Endothelial cell of umbilical vein (primary cell): ENCODE measurements at regions of chr14 and their contacts with region 1.

Region 1: DNA sequence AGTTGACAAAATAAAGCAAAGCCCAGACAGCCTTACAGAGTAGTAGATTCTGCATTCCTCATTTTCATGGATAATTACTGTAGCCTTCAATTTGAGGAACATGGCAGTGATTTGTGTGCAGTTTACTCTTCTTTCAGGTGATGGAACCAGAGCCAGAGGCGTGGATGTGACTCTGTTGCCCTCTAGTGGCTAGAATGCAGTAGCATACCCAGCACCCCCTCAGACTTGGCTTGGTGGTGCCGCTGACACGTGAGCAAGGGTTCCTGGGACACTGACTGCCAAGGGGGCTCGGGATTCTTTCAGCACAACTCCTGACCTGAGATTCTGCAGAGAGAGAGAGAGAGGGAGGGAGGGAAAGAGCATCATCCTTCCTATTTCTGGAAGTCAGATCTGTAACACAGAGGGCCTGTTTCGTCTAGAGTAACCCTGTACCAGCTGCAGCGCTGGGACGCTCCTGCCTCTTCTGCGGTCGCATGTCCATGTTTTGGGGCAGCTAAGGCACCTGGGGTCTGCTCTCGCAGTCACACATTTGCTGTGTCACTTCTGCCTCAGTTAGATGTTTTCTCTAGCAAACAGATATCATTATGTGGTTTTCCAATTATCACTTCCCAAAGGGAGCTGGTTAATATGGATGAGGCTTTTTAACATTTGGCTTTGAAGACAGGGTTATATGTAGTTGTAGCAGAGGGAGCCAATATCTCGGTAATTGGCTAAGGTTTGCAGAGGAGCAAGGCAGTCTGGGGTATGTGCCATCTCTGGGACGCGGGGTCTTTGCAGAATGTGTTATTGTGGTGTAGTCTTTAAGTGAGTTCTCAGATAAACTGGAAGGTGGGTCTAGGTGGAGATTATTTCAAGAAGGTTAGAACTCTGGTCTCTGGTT is 428.1 kb downstream of the NRXN3 start:
- DNase-seq: peak; percentile 58
- H3K4me3 ChIP-seq: no peak overlapping the region
- H3K27ac ChIP-seq: no peak overlapping the region
- H3K4me1 ChIP-seq: no peaks in the 10 kb centered on the region
- H3K27me3 ChIP-seq: peaks cover 4 to 9% of the 10 kb centered on the region in 2 experiments
- CTCF ChIP-seq: peak; percentile 87 to 96
- POLR2A ChIP-seq: no peak

Region 2: DNA sequence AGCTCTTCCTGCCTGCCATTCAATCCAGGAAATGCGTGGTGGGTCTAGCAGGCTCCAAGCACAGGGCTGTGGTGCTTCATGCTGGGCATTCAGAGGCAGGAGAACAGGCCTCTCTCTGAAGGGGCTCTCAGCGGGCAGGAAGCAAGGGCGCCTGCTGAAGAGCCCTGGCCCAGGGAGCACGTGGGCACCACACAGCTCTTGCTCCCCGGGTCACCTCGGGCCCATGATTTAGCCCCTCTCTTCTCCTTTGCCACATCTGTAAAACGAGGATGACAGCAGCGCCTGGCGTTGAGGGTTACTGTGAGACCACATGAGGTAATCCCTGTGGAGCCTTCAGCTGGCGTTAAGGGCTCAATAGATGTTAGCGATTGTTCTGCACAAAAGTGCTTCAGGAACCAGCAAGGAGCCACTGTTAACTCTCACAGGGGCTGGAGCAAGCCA is 944.3 kb before region 1 on chr14:
- CTCF ChIA-PET with region 1: interaction called, 3 read pairs
- POLR2A ChIA-PET with region 1: no interaction called
- dilution Hi-C with region 1: no loop called
- intact Hi-C with region 1: loop called (anchors 10 kb)
- DNase-seq: no peak
- H3K4me3 ChIP-seq: no peak overlapping the region
- H3K27ac ChIP-seq: no peak overlapping the region
- H3K4me1 ChIP-seq: peaks cover 7% of the 10 kb centered on the region
- H3K27me3 ChIP-seq: no peaks in the 10 kb centered on the region
- CTCF ChIP-seq: no peak
- POLR2A ChIP-seq: no peak

Region 3: DNA sequence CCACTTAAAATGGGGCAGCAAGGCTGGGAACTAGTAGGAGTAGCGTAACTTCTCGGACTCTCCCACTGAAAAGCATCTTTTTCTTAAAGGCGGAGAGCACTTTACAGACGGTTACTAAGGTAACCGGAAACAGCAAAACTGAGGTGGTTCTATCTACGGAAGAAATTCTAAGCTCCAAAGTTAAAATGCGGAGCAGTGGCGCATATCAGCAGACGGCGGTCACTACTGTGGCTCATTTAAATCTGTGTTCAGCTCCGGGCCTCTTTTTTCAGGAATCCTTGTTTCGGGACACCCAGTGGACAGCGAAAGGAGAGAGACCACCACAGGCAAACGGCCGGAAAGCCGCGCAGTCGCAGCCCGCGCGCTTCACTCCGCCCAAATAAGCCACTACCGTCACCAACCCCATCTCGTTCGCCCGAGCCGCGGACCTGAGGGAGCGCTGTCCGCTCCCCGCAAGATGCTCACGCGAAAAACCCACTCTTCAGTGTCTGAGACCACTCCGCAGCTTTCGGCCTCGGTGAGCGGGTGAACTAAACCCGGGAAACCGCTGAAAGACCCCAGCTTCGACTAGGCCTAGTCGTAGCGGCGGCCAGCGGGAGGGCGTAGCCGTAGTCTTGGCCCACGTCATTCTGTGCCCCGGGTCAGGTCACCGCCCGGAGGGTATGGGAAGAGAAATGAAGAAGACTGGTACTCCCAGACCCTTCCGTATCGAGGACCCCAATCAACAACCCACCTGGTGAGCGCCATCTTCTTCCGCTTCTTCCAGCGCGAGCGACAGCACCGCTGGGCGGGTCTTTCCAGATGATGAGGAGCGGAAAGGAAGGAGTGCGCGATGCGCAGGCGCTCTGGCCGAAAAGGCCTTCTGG is 837.7 kb before region 1 on chr14 and contains the start of gene SNW1:
- CTCF ChIA-PET with region 1: no interaction called
- POLR2A ChIA-PET with region 1: no interaction called
- dilution Hi-C with region 1: no loop called
- intact Hi-C with region 1: loop called (anchors 2 kb)
- DNase-seq: peak; percentile 96
- H3K4me3 ChIP-seq: peak within 1 kb of the TSS; percentile 79 to 93 (median 82)
- H3K27ac ChIP-seq: peak within 1 kb of the TSS; percentile 94
- H3K4me1 ChIP-seq: peaks cover 8% of the 10 kb centered on the region
- H3K27me3 ChIP-seq: no peaks in the 10 kb centered on the region
- CTCF ChIP-seq: no peak
- POLR2A ChIP-seq: peak; percentile 82
- total RNA-seq, gene SNW1: 96.3 and 104 TPM in 2 replicates

Region 4: GRCh38 chr14:77862154-77862786 is 736.0 kb before region 1 on chr14:
- CTCF ChIA-PET with region 1: interaction called, 54 read pairs
- POLR2A ChIA-PET with region 1: no interaction called
- dilution Hi-C with region 1: no loop called
- intact Hi-C with region 1: loop called (anchors 1 kb)
- DNase-seq: peak; percentile 57
- H3K4me3 ChIP-seq: no peak overlapping the region
- H3K27ac ChIP-seq: no peak overlapping the region
- H3K4me1 ChIP-seq: no peaks in the 10 kb centered on the region
- H3K27me3 ChIP-seq: no peaks in the 10 kb centered on the region
- CTCF ChIP-seq: peak; percentile 97 to 99
- POLR2A ChIP-seq: no peak

Region 5: DNA sequence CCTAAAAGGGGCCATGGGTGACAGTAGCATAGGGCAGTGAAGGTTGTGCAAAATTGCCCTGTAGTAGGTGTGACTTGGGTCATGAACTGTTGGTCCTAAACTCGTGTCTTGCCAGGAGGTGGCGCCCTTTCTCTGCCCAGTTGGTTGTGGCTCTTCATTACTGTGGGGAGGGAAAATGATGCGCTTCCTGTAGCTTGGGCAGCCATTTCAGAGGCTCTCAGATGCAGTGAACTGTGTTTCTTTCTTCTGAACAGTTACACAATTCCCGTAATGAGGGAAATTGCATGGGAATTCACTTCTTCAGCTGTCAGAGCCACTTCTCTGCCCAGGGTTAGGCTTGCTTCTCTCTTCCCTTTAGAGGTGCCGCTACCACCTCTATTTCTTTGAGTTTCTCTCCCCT is 576.2 kb before region 1 on chr14:
- CTCF ChIA-PET with region 1: interaction called, 26 read pairs
- POLR2A ChIA-PET with region 1: no interaction called
- dilution Hi-C with region 1: no loop called
- intact Hi-C with region 1: loop called (anchors 1 kb)
- DNase-seq: peak; percentile 44
- H3K4me3 ChIP-seq: no peak overlapping the region
- H3K27ac ChIP-seq: no peak overlapping the region
- H3K4me1 ChIP-seq: no peaks in the 10 kb centered on the region
- H3K27me3 ChIP-seq: no peaks in the 10 kb centered on the region
- CTCF ChIP-seq: peak; percentile 54 to 61
- POLR2A ChIP-seq: no peak

Region 6: GRCh38 chr14:78448164-78449094 is 149.9 kb before region 1 on chr14:
- CTCF ChIA-PET with region 1: interaction called, 6 read pairs
- POLR2A ChIA-PET with region 1: no interaction called
- dilution Hi-C with region 1: no loop called
- intact Hi-C with region 1: loop called (anchors 1 kb)
- DNase-seq: peak; percentile 47
- H3K4me3 ChIP-seq: no peak overlapping the region
- H3K27ac ChIP-seq: no peak overlapping the region
- H3K4me1 ChIP-seq: no peaks in the 10 kb centered on the region
- H3K27me3 ChIP-seq: no peaks in the 10 kb centered on the region
- CTCF ChIP-seq: peak; percentile 63 to 66
- POLR2A ChIP-seq: no peak

Region 7: GRCh38 chr14:78509516-78509915 is 88.8 kb before region 1 on chr14:
- CTCF ChIA-PET with region 1: no interaction called
- POLR2A ChIA-PET with region 1: no interaction called
- dilution Hi-C with region 1: no loop called
- intact Hi-C with region 1: no loop called
- DNase-seq: no peak
- H3K4me3 ChIP-seq: no peak overlapping the region
- H3K27ac ChIP-seq: no peak overlapping the region
- H3K4me1 ChIP-seq: no peaks in the 10 kb centered on the region
- H3K27me3 ChIP-seq: no peaks in the 10 kb centered on the region
- CTCF ChIP-seq: no peak
- POLR2A ChIP-seq: no peak

Region 8: GRCh38 chr14:78697341-78697740 is 99.1 kb after region 1 on chr14:
- CTCF ChIA-PET with region 1: interaction called, 3 read pairs
- POLR2A ChIA-PET with region 1: no interaction called
- dilution Hi-C with region 1: no loop called
- intact Hi-C with region 1: loop called (anchors 5 kb)
- DNase-seq: peak; percentile 46
- H3K4me3 ChIP-seq: no peak overlapping the region
- H3K27ac ChIP-seq: no peak overlapping the region
- H3K4me1 ChIP-seq: no peaks in the 10 kb centered on the region
- H3K27me3 ChIP-seq: no peaks in the 10 kb centered on the region
- CTCF ChIP-seq: peak; percentile 11 to 35
- POLR2A ChIP-seq: no peak